ENCODE measurements at regions of chr21 and their contacts with region 1.

Region 1: DNA sequence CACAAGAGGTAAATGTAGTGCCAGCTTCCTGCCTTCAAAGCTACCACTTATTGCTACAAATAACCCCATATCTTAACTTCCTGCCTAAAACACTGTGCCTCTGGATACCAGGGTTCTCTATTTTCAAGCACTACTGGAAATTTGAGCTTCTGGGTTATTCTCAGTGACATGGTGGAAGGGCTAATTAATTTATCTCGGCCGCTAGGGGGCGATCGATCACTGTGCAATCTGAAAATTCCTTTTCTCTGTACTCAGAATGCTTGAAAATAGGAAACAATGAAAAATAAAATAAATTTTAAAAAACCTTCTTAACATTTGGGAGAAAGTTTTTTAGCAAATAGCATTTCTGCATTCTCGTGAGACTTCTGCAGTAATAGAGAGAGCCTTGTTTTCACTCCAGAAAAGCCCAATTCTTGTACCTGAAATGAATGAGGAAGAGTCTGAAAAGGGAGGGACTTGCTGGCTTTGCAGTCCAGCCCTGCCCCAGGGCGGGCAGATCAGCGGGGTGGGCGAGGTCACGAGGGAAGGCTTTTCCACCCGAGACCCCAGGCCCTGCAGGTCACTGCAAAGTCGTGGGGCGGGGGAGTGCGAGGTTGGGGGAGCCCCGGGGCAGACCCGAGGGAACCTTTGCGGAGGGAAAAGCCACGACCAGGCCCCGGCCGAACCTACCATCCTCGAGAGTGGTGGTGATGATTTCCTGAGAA is 276.7 kb downstream of the PCP4 start:
- DNase-seq: peak in 2 of 3 donors; percentile 39 to 67
- ATAC-seq: peak; percentile 50
- H3K4me3 ChIP-seq: no peak overlapping the region
- H3K4me1 ChIP-seq: no peaks in the 10 kb centered on the region
- CTCF ChIP-seq: peak; percentile 59

Region 2: GRCh38 chr21:39882151-39882838 is 261.7 kb before region 1 on chr21:
- intact Hi-C with region 1: no loop called
- DNase-seq: no peak
- ATAC-seq: no peak
- H3K4me3 ChIP-seq: no peak overlapping the region
- H3K4me1 ChIP-seq: no peaks in the 10 kb centered on the region
- CTCF ChIP-seq: no peak

Region 3: GRCh38 chr21:40385892-40386599 is 242.1 kb after region 1 on chr21:
- intact Hi-C with region 1: loop called (anchors 10 kb)
- DNase-seq: peak; percentile 47 to 57 (median 51)
- ATAC-seq: peak; percentile 78
- H3K4me3 ChIP-seq: no peak overlapping the region
- H3K4me1 ChIP-seq: no peaks in the 10 kb centered on the region
- CTCF ChIP-seq: peak; percentile 61

Measured in mucosa of descending colon (tissue), 3 donors.